Activated CD4-positive, alpha-beta memory T cell treated with anti-CD3 and anti-CD28 coated beads for 36 hours (primary cell): ENCODE measurements at regions of chr12 and their contacts with region 1.

Region 1: DNA sequence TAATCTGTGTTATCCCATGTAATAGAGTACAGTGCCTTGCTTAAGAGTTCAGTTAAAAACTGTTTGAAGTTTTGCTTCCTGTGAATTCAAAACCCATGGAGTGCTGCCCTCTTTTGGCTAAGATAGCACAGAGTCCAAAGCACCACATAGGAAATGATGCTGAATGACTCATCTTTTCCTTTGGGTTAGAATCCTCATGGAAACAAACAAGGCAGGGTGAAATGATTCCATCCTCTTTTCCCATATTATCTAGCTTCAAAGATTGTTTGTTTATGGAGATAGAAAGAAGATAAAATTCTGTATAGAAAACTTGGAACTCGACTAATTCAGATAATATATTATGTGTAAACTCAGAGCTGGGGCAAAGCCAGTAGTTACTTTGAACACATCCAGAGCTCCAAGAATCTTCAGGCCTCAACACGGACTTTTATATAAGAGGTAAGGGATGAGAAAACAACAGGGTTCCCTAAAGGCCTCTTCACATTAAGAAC is 87.4 kb downstream of the OTOGL start:
- DNase-seq: peak; percentile 19
- H3K4me3 Mint-ChIP-seq: no peak overlapping the region
- H3K27ac Mint-ChIP-seq: no peak overlapping the region
- H3K4me1 Mint-ChIP-seq: peaks cover 6% of the 10 kb centered on the region
- H3K27me3 Mint-ChIP-seq: peaks cover 2% of the 10 kb centered on the region

Region 2: GRCh38 chr12:79555028-79555930 is 631.5 kb before region 1 on chr12:
- CTCF ChIA-PET with region 1: no interaction called
- POLR2A ChIA-PET with region 1: no interaction called
- intact Hi-C with region 1: loop called (anchors 5 kb)
- DNase-seq: no peak
- H3K4me3 Mint-ChIP-seq: no peak overlapping the region
- H3K27ac Mint-ChIP-seq: no peak overlapping the region
- H3K4me1 Mint-ChIP-seq: no peaks in the 10 kb centered on the region
- H3K27me3 Mint-ChIP-seq: no peaks in the 10 kb centered on the region

Region 3: DNA sequence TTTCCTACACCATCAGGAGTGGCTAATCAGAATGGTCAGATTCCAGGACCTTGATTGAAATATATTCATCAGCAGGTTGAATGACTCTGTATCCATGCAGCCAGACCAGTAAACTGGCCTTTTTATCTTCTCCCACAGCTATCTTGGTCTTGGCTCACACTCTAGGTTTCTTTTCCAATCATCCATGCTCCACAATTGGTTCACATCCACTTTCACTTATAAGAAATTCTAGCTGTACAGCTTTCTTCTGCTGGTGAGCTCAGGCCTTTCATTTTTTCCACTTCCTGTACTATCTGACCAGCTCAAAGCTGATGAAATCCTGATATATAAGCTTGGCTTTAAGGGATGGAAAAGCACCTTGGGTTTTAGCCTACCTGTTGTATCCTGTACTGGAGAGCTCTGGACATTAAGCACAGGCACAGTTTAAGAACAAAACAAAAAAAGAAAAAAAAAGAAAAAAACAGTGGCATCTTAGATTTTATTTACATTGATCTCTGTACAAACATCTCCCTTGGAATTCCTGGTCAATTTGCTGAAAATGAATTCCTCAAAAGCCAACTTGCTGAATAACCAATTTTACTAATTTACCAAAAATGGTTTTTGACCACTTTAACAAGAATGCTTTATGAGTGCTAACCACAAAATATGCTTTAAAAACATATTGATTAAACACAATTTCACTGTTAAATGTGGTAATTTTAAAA is 404.4 kb before region 1 on chr12:
- CTCF ChIA-PET with region 1: no interaction called
- POLR2A ChIA-PET with region 1: no interaction called
- intact Hi-C with region 1: loop called (anchors 10 kb)
- DNase-seq: no peak
- H3K4me3 Mint-ChIP-seq: no peak overlapping the region
- H3K27ac Mint-ChIP-seq: peak overlapping the region; percentile 58
- H3K4me1 Mint-ChIP-seq: peaks cover 5% of the 10 kb centered on the region
- H3K27me3 Mint-ChIP-seq: no peaks in the 10 kb centered on the region

Region 4: GRCh38 chr12:79834712-79835376 is 351.9 kb before region 1 on chr12:
- CTCF ChIA-PET with region 1: no interaction called
- POLR2A ChIA-PET with region 1: no interaction called
- intact Hi-C with region 1: no loop called
- DNase-seq: no peak
- H3K4me3 Mint-ChIP-seq: no peak overlapping the region
- H3K27ac Mint-ChIP-seq: no peak overlapping the region
- H3K4me1 Mint-ChIP-seq: peaks cover 51% of the 10 kb centered on the region
- H3K27me3 Mint-ChIP-seq: no peaks in the 10 kb centered on the region

Region 5: GRCh38 chr12:79886917-79887519 is 299.8 kb before region 1 on chr12:
- CTCF ChIA-PET with region 1: no interaction called
- POLR2A ChIA-PET with region 1: no interaction called
- intact Hi-C with region 1: loop called (anchors 1 kb)
- DNase-seq: no peak
- H3K4me3 Mint-ChIP-seq: no peak overlapping the region
- H3K27ac Mint-ChIP-seq: no peak overlapping the region
- H3K4me1 Mint-ChIP-seq: peaks cover 59% of the 10 kb centered on the region
- H3K27me3 Mint-ChIP-seq: no peaks in the 10 kb centered on the region

Region 6: DNA sequence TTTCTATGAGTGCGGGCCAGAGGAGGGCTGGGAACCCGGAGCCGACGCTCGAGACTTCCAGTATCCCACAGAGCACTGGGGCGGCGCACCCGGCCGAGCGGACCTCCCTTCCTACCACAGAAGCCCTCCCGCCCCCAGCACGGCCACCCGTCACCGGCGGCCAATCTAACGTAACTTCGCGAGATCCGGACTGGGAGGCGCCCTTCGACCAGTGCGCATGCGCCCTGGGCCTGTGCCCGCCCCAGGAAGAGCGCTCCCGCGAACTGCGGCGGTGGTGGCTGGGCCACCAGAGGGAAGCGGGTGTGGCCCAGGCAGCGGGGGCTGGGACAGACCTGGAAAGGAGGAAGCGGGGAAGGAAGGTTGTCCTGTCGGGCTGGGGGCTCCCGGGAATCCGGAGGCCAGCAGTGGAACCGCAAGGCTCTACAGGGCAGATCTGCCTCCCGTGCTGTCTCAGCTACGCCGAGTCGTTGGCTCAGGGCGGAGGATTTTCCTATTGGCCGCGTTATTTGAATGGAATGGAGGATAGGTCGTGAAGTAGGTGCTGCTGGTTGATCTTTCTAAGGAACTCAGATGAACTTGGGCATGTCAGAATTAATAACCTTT is 251.7 kb before region 1 on chr12 and contains the start of gene PPP1R12A:
- CTCF ChIA-PET with region 1: no interaction called
- POLR2A ChIA-PET with region 1: no interaction called
- intact Hi-C with region 1: loop called (anchors 2 kb)
- DNase-seq: peak; percentile 97
- H3K4me3 Mint-ChIP-seq: peak within 1 kb of the TSS; percentile 85
- H3K27ac Mint-ChIP-seq: peak within 1 kb of the TSS; percentile 99
- H3K4me1 Mint-ChIP-seq: peaks cover 33% of the 10 kb centered on the region
- H3K27me3 Mint-ChIP-seq: no peaks in the 10 kb centered on the region
- total RNA-seq, gene PPP1R12A: 74.5 to 75.7 TPM

Region 7: DNA sequence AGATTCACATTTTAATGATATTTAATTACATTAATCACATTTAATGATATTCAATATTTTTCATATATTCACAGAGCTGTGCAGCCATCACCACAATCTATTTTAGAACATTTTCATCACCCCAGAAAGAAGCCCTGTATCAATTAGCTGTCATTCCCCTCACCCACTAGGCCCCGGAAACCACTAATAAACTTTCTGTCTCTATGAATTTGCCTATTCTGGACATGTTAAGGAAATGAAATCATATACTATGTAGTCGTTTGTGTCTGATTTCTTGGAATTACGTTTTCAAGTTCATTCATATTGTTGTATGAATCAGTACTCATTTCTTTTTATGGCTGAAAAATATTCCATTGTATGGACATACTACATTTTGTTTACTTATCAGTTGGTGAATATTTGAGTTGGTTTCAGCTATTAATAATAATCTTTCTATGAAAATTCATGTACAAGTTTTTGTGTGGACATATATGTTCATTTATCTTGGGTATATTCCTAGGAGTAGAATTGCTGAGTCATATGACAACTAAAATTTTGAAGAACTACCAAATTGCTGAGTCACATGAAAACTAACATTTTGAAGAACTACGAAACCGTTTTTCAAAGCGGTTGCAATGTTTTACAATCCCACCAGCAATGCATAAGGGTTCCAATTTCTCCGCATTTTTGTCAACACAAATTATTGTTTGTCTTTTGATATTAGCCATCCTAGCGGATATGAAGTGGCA is 99.1 kb before region 1 on chr12:
- CTCF ChIA-PET with region 1: no interaction called
- POLR2A ChIA-PET with region 1: no interaction called
- intact Hi-C with region 1: loop called (anchors 5 kb)
- DNase-seq: no peak
- H3K4me3 Mint-ChIP-seq: no peak overlapping the region
- H3K27ac Mint-ChIP-seq: no peak overlapping the region
- H3K4me1 Mint-ChIP-seq: peaks cover 16% of the 10 kb centered on the region
- H3K27me3 Mint-ChIP-seq: no peaks in the 10 kb centered on the region

Region 8: DNA sequence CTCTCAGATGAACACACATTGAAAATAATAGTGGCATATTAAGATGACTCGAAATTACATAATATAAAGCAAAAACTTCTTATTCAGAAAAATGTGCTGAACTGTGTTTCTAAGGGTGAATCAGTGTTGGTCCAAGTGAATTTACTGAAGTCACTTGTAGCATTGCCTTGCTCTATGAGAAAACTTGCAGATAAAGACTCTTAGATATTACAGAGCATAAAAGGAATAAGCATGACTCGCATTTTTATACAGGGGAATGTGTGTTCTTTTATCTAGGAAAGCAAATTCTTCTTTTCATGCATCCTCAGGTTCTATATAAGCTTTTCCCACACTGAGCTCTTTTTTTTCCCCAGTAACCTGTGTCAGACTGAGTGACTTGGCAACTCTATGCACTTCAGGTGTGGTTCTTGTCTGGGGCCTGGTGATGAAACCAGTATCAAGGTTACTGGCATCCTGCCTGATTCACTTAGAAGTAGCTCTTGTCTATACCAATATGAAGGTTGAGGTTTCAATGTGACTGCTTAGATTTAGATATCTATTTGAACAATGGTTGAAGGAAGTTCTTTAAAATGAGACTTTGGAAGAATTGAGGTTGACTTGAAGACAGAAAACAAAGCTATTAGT is 11.4 kb before region 1 on chr12:
- CTCF ChIA-PET with region 1: no interaction called
- POLR2A ChIA-PET with region 1: no interaction called
- intact Hi-C with region 1: no loop called
- DNase-seq: peak; percentile 17
- H3K4me3 Mint-ChIP-seq: no peak overlapping the region
- H3K27ac Mint-ChIP-seq: no peak overlapping the region
- H3K4me1 Mint-ChIP-seq: peaks cover 4% of the 10 kb centered on the region
- H3K27me3 Mint-ChIP-seq: peaks cover 6% of the 10 kb centered on the region

Region 9: GRCh38 chr12:81100611-81101169 is 913.9 kb after region 1 on chr12:
- CTCF ChIA-PET with region 1: no interaction called
- POLR2A ChIA-PET with region 1: no interaction called
- intact Hi-C with region 1: no loop called
- DNase-seq: no peak
- H3K4me3 Mint-ChIP-seq: no peak overlapping the region
- H3K27ac Mint-ChIP-seq: no peak overlapping the region
- H3K4me1 Mint-ChIP-seq: no peaks in the 10 kb centered on the region
- H3K27me3 Mint-ChIP-seq: no peaks in the 10 kb centered on the region